Astrocyte of the cerebellum (primary cell): ENCODE measurements at regions of chr20 and their contacts with region 1.

Region 1: GRCh38 chr20:61135968-61136367 is 116.1 kb upstream of the CDH4 start:
- DNase-seq: no peak
- H3K4me3 ChIP-seq: no peak overlapping the region
- CTCF ChIP-seq: no peak

Region 2: DNA sequence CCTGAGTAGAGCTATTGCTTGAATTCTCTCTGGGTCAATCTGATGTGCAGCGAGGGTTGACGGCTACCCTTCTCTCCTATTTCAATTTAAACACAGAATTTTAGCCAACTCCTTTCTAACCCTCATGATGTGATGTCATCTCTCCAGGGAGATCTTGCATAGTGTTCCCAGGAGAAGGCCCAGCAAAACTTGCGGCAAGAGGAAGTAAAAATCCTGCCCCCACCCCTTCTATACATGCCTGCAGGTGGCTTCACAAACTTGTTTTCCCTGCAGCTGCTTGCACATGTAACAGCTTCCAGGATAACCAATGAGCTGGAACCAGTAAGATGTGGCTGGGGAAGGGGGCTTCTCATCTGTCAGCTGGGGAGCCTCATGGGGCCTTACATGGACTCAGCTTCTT is 53.2 kb before region 1 on chr20:
- in situ Hi-C with region 1: loop called (anchors 5 kb)
- DNase-seq: no peak
- H3K4me3 ChIP-seq: no peak overlapping the region
- CTCF ChIP-seq: no peak

Region 3: GRCh38 chr20:61106438-61106837 is 29.5 kb before region 1 on chr20:
- in situ Hi-C with region 1: no loop called
- DNase-seq: no peak
- H3K4me3 ChIP-seq: no peak overlapping the region
- CTCF ChIP-seq: no peak

Region 4: DNA sequence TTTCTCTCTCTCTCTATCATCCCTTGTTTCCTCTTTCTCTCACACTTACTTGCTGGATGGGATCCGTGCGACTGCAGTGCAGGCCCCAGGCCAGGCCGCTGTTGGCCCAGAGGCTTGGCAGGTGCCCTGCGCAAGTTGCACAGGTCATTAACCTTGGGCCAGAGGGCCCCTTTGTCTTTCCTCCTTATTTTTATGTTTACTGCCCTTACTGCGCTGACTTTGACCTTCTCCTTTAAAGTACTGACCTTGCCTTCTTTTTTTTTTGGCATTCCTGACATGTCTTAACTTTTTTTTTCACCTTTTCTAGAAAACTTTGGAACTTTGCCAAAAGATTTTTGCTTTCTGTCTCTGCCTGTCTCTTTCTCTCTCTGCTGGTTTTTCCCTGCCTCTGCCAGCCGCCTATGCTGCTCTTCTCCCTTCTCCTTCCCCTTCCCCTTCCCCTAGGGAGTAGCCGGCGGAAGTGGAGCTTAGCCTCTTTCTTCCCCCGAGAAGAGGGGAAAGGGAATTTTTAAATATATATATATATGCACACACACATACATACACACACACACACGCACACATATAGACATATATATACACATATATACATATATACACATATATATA is 56.5 kb after region 1 on chr20:
- in situ Hi-C with region 1: loop called (anchors 5 kb)
- DNase-seq: no peak
- H3K4me3 ChIP-seq: no peak overlapping the region
- CTCF ChIP-seq: no peak